Naive thymus-derived CD4-positive, alpha-beta T cell (primary cell): ENCODE measurements at regions of chr1 and their contacts with region 1.

Region 1: GRCh38 chr1:15028102-15028501 is 125.4 kb upstream of the TMEM51 start:
- DNase-seq: no peak
- ATAC-seq: no peak
- H3K4me3 ChIP-seq: no peak overlapping the region
- H3K4me3 Mint-ChIP-seq: no peak overlapping the region
- H3K27ac ChIP-seq: no peak overlapping the region
- H3K27ac Mint-ChIP-seq: no peak overlapping the region
- H3K4me1 ChIP-seq: no peaks in the 10 kb centered on the region
- H3K4me1 Mint-ChIP-seq: peaks cover 0 to 3% (median 0%) of the 10 kb centered on the region in 7 donors
- H3K27me3 ChIP-seq: no peaks in the 10 kb centered on the region
- H3K27me3 Mint-ChIP-seq: peaks cover 0 to 8% (median 0%) of the 10 kb centered on the region in 5 donors

Region 2: DNA sequence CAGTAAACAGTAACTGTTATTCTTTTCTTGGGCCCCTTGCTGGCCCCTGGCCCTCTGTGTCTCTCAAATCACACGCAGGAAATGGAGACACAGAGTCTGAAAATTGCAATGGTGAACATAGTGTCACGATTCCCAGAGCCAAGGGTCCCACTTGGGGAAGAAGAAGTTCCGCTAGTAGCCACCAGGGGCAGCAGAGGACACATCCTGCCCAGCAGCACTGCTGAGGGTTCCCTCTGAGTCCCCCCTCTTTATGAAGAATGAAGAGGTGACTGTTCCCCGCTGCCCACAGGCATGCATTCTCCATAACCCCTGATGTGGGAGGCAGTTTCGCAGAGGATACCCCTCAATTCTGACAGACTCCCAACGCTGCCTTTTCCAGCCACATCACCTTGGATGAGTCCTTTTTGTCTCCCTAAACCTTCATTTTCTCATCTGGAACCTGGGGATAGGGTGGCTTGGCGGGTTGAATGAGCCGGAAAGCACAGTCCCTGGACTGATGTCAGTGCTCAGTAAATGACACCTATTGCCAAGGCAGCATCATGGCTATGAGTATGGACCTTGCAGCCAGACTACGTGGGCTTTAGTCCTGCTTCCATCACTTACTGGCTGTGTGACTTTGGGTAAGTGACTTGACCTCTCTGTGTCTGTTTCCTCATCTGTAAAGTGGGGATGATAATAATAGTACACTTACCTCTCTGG is 112.6 kb before region 1 on chr1:
- CTCF ChIA-PET with region 1: no interaction called
- POLR2A ChIA-PET with region 1: no interaction called
- intact Hi-C with region 1: loop called in 1 of 2 experiments (anchors 10 kb)
- DNase-seq: peak in 5 of 9 donors; percentile 13 to 47 (median 24)
- ATAC-seq: peak; percentile 60
- H3K4me3 ChIP-seq: no peak overlapping the region
- H3K4me3 Mint-ChIP-seq: no peak overlapping the region
- H3K27ac ChIP-seq: no peak overlapping the region
- H3K27ac Mint-ChIP-seq: no peak overlapping the region
- H3K4me1 ChIP-seq: no peaks in the 10 kb centered on the region
- H3K4me1 Mint-ChIP-seq: no peaks in the 10 kb centered on the region
- H3K27me3 ChIP-seq: no peaks in the 10 kb centered on the region
- H3K27me3 Mint-ChIP-seq: peaks cover 0 to 4% (median 0%) of the 10 kb centered on the region in 5 donors

Region 3: GRCh38 chr1:14923727-14924452 is 104.2 kb before region 1 on chr1:
- CTCF ChIA-PET with region 1: no interaction called
- POLR2A ChIA-PET with region 1: no interaction called
- intact Hi-C with region 1: loop called (anchors 2 to 10 kb)
- DNase-seq: peak in 5 of 9 donors; percentile 9 to 49 (median 18)
- ATAC-seq: peak; percentile 79
- H3K4me3 ChIP-seq: no peak overlapping the region
- H3K4me3 Mint-ChIP-seq: peak overlapping the region; percentile 50 to 85 (median 70)
- H3K27ac ChIP-seq: no peak overlapping the region
- H3K27ac Mint-ChIP-seq: no peak overlapping the region
- H3K4me1 ChIP-seq: peaks cover 0 to 5% of the 10 kb centered on the region in 2 donors
- H3K4me1 Mint-ChIP-seq: peaks cover 3 to 15% (median 5%) of the 10 kb centered on the region in 7 donors
- H3K27me3 ChIP-seq: peaks cover 0 to 8% of the 10 kb centered on the region in 2 donors
- H3K27me3 Mint-ChIP-seq: peaks cover 35 to 58% (median 48%) of the 10 kb centered on the region in 5 donors